Heart left ventricle (tissue), 16 donors: ENCODE measurements at regions of chr17 and their contacts with region 1.

Region 1: DNA sequence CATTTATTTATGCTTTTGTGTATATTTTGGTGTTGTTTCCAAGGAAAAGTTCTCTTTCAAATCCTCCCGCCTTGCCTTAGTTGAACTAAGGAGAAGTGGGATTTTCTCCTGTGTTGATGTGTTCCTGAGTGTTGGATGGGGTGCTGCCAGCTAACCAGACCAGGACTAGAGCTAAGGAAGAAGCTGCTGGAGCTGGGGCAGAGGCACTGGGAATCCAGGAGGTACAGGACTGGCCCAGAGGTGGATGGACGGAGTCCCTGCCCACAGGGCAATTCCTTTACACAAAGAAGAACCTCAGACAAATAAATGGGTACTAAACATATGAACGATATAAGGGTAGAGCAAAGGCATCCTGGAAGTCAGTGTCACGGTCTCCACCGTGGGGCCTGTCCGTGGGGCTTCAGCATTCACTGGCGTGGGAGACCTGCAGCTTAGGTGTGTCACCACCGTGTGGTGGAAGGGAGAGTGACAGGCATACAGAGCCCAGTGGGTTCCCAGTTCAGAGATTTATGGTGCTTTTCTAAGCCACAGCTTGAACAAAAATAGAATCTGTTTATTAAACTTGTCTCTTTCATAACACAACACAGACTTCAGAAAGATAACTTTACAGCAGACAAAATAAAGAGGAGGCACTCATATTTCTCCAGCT is 270.7 kb downstream of the NTN1 start:
- DNase-seq: peak; percentile 29 to 66 (median 48)
- ATAC-seq: peak; percentile 56 to 93 (median 89)
- H3K4me3 ChIP-seq: no peak overlapping the region
- H3K27ac ChIP-seq: peak overlapping the region in 3 of 12 donors; percentile 17 to 44 (median 36)
- H3K4me1 ChIP-seq: peaks cover 0 to 14% (median 3%) of the 10 kb centered on the region in 12 donors
- H3K27me3 ChIP-seq: no peaks in the 10 kb centered on the region
- CTCF ChIP-seq: peak; percentile 53 to 86 (median 79)
- POLR2A ChIP-seq: no peak

Region 2: DNA sequence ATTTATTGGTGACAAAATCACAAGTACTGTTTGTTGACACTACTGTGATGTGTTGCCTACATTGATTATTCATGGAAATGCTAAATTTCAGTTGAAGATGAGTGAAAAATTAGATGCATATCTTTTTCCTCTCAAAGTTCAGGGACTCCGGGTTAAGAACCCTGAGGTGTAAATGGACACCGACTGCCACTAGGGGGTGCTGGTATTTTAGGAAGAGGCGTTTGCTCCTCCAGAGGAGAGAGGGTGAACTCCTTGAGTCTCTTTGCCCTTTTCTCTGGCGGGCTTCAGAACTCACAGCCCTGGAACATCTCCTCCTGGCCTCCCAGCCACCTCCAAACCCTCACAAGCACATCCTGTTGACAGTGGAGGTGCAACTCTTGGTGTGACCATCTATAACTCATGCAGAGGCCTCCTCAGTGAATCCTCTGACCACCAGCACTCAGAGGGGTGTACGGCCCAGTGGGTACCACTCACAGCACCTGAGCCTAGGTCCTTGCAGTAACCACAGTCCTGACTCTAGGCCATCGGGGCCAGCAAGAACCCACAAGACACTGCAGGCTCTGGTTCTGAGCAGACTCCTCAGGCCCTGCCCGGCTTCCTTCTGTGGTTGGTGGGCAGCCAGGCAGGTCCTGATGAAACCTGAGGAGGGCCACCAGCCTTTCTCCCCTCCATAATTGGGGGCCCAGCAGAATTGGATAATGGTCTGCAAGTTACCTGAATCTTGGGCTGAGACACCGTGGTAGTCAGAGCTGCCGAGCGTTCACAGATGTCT is 300.3 kb before region 1 on chr17:
- intact Hi-C with region 1: loop called in 9 of 10 experiments (anchors 2 to 5 kb)
- DNase-seq: peak in 4 of 5 donors; percentile 44 to 63 (median 57)
- ATAC-seq: peak in 3 of 4 donors; percentile 67 to 77 (median 74)
- H3K4me3 ChIP-seq: no peak overlapping the region
- H3K27ac ChIP-seq: no peak overlapping the region
- H3K4me1 ChIP-seq: no peaks in the 10 kb centered on the region
- H3K27me3 ChIP-seq: peaks cover 0 to 10% (median 0%) of the 10 kb centered on the region in 9 donors
- CTCF ChIP-seq: peak; percentile 71 to 85 (median 76)
- POLR2A ChIP-seq: no peak

Region 3: DNA sequence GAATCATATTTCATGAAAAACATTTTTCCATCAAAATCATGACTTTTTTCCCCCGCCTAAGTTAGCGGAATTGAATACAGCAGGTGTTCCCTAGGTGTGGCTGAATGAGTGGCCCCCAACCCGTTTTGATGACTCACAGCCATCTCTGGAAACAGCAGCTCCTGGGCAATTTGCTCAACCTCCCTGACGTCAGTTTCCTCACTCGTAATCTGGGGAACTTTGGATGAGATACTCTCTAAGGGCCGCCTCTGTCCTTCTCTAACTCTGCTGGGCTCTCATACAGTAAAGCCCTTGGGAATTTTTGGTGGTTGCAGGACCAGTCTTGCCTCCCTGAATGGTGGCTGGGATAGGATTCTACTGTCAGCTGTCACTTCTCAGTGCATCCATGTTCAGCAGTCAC is 282.3 kb before region 1 on chr17:
- intact Hi-C with region 1: loop called in 2 of 10 experiments (anchors 5 kb)
- DNase-seq: no peak
- ATAC-seq: no peak
- H3K4me3 ChIP-seq: no peak overlapping the region
- H3K27ac ChIP-seq: no peak overlapping the region
- H3K4me1 ChIP-seq: peaks cover 0 to under 1% (median 0%) of the 10 kb centered on the region in 12 donors
- H3K27me3 ChIP-seq: peaks cover 0 to 58% (median 19%) of the 10 kb centered on the region in 9 donors
- CTCF ChIP-seq: no peak
- POLR2A ChIP-seq: no peak

Region 4: DNA sequence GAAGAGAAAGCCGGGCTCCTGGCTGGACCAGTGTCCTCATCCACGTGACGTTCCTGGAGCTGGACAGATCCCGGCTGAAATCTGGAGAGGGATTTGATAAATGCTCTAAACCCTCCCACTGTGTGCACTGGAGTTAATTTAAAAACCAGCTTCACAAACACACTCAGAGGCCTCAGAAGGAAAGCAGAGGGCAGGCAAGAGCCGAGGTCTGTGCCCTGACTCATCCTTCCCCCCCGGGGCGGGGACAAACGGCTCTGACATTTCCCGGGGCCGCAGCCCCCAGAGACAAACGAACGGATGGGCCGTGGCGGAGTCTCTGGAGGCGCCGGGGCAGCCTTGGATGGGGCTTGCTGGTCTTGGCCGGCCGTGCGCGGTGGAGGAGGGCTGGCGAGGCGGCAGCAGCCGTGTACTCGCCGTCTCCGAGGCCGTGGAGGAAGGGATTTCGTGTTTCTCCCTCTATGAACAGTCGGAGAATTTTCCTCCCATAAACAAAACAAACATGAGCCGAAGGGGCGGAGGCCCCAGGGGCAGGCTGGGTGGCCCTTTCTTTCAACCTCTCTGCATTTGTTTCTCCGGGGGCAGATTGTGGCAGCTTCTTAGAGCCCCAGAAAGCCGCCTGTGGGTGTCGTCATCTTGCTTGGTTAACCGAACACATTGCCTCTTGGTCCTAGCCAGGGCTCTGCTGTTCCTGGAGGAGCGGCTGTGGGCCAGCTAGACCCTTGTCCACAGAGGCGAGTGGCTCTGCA is 176.4 kb before region 1 on chr17:
- intact Hi-C with region 1: loop called in 1 of 10 experiments (anchors 10 kb)
- DNase-seq: peak; percentile 64 to 85 (median 71)
- ATAC-seq: peak; percentile 70 to 92 (median 86)
- H3K4me3 ChIP-seq: peak overlapping the region in 11 of 12 donors; percentile 4 to 54 (median 40)
- H3K27ac ChIP-seq: peak overlapping the region in 9 of 12 donors; percentile 22 to 71 (median 44)
- H3K4me1 ChIP-seq: peaks cover 0 to 17% (median 5%) of the 10 kb centered on the region in 12 donors
- H3K27me3 ChIP-seq: no peaks in the 10 kb centered on the region
- CTCF ChIP-seq: peak in 9 of 12 donors; percentile 17 to 53 (median 41)
- POLR2A ChIP-seq: no peak

Region 5: GRCh38 chr17:9512323-9513168 is 220.5 kb after region 1 on chr17:
- intact Hi-C with region 1: loop called in 2 of 10 experiments (anchors 10 kb)
- DNase-seq: no peak
- ATAC-seq: peak in 1 of 4 donors; percentile 56
- H3K4me3 ChIP-seq: no peak overlapping the region
- H3K27ac ChIP-seq: no peak overlapping the region
- H3K4me1 ChIP-seq: no peaks in the 10 kb centered on the region
- H3K27me3 ChIP-seq: no peaks in the 10 kb centered on the region
- CTCF ChIP-seq: no peak
- POLR2A ChIP-seq: no peak